PC-9 (cell line): ENCODE measurements at regions of chr9 and their contacts with region 1.

Region 1: GRCh38 chr9:91727316-91727861 is 222.6 kb downstream of the ROR2 start:
- DNase-seq: peak; percentile 37 to 48
- H3K4me3 ChIP-seq: no peak overlapping the region
- H3K27ac ChIP-seq: no peak overlapping the region
- H3K4me1 ChIP-seq: no peaks in the 10 kb centered on the region
- H3K27me3 ChIP-seq: 0 out of 2 replicates have a peak, but pooled peaks cover 8% of the 10 kb centered on the region
- CTCF ChIP-seq: peak; percentile 84

Region 2: GRCh38 chr9:91391412-91391811 is 336.0 kb before region 1 on chr9:
- CTCF ChIA-PET with region 1: no interaction called
- POLR2A ChIA-PET with region 1: no interaction called
- intact Hi-C with region 1: no loop called
- DNase-seq: no peak
- H3K4me3 ChIP-seq: no peak overlapping the region
- H3K27ac ChIP-seq: no peak overlapping the region
- H3K4me1 ChIP-seq: peaks cover 19% of the 10 kb centered on the region
- H3K27me3 ChIP-seq: no peaks in the 10 kb centered on the region
- CTCF ChIP-seq: no peak

Region 3: DNA sequence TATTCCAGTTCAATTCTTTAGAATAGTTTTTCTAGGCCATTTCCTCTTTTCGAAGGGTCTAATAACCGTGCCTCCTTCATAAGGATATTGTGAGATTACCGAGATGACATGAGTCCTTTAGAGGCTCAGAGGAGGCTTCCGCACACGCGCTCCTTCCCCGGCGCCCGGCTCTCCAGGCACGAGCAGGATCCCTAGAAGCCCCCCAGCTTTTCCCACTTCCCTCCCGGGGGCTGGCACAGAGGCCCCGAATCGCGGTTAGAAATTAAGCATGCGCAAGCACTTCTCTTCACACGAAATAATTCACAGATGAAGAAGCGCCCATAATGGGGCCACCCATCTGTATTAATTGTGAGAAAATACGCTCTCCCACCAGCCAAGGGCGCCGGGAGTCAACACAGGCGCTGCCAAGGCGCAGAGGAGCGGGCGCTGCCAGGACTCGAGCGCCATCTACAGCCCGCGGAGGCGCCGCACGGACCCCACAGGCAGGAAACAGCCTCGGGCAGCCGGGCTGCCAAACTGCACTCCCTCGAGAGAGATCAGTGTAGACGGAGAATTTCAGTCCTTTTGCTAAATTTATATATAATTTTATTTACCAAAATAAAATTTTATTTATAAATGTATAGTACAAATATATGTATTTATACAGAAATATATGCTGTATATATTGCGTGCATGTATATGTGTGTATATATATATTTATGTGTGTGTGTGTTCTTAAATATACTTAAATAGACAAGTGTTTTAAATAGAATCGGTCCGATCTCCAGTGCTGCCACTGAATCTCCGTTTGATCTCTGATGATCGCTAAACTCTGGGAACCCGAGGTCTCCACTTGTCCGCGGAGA is 45.7 kb before region 1 on chr9:
- CTCF ChIA-PET with region 1: no interaction called
- POLR2A ChIA-PET with region 1: no interaction called
- intact Hi-C with region 1: loop called (anchors 5 kb)
- DNase-seq: peak in 1 of 2 experiments; percentile 64
- H3K4me3 ChIP-seq: no peak overlapping the region
- H3K27ac ChIP-seq: no peak overlapping the region
- H3K4me1 ChIP-seq: no peaks in the 10 kb centered on the region
- H3K27me3 ChIP-seq: no peaks in the 10 kb centered on the region
- CTCF ChIP-seq: peak; percentile 72

Region 4: GRCh38 chr9:91711755-91712601 is 15.4 kb before region 1 on chr9:
- CTCF ChIA-PET with region 1: no interaction called
- POLR2A ChIA-PET with region 1: no interaction called
- intact Hi-C with region 1: no loop called
- DNase-seq: no peak
- H3K4me3 ChIP-seq: no peak overlapping the region
- H3K27ac ChIP-seq: no peak overlapping the region
- H3K4me1 ChIP-seq: no peaks in the 10 kb centered on the region
- H3K27me3 ChIP-seq: peaks cover 6% of the 10 kb centered on the region; the same call in 1 of the 2 replicates
- CTCF ChIP-seq: no peak

Region 5: DNA sequence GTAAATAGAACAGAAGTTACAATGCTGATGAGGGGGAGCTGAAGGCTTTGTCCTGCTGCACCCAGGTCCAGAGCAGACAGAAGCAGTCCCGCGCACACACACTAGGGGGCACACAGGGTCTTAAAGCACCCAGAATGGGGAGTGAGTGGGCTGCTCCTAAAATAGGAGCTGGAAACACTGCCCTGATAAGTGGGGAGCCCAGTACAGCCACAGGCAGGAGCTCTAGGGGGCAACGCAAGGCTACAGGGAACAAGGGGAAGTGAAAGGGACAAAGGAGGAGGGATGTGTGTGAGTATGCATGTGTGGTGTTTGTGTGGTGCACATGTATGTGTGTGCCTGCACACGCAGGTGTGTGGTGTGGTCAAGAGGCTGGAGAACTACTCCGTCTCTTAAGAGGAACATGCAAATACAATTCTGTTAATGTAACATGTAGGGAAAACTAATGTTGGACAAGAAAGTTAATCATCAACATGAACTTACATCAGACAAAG is 31.1 kb after region 1 on chr9:
- CTCF ChIA-PET with region 1: no interaction called
- POLR2A ChIA-PET with region 1: no interaction called
- intact Hi-C with region 1: no loop called
- DNase-seq: peak in 1 of 2 experiments; percentile 21
- H3K4me3 ChIP-seq: no peak overlapping the region
- H3K27ac ChIP-seq: no peak overlapping the region
- H3K4me1 ChIP-seq: no peaks in the 10 kb centered on the region
- H3K27me3 ChIP-seq: peaks cover 19% of the 10 kb centered on the region
- CTCF ChIP-seq: peak; percentile 76